ENCODE measurements at regions of chr6 and their contacts with region 1.

Region 1: GRCh38 chr6:43070028-43070632 is 6.0 kb upstream of the PTK7 start:
- DNase-seq: peak; percentile 83
- ATAC-seq: peak; percentile 93
- H3K4me3 ChIP-seq: no peak overlapping the region
- H3K27ac ChIP-seq: peak overlapping the region; percentile 7
- H3K4me1 ChIP-seq: peaks cover 12% of the 10 kb centered on the region
- H3K27me3 ChIP-seq: no peaks in the 10 kb centered on the region
- CTCF ChIP-seq: peak; percentile 72
- EP300 ChIP-seq: no peak
- POLR2A ChIP-seq: no peak
- RAD21 ChIP-seq: peak; percentile 83

Region 2: GRCh38 chr6:43045371-43045930 is 24.7 kb before region 1 on chr6:
- CTCF ChIA-PET with region 1: no interaction called
- POLR2A ChIA-PET with region 1: no interaction called
- in situ Hi-C with region 1: no loop called
- intact Hi-C with region 1: no loop called
- DNase-seq: no peak
- ATAC-seq: no peak; the same call in 2 of the 3 replicates
- H3K4me3 ChIP-seq: no peak overlapping the region
- H3K27ac ChIP-seq: no peak overlapping the region
- H3K4me1 ChIP-seq: peaks cover 2% of the 10 kb centered on the region
- H3K27me3 ChIP-seq: no peaks in the 10 kb centered on the region
- CTCF ChIP-seq: no peak
- EP300 ChIP-seq: no peak
- POLR2A ChIP-seq: no peak
- RAD21 ChIP-seq: no peak

Region 3: DNA sequence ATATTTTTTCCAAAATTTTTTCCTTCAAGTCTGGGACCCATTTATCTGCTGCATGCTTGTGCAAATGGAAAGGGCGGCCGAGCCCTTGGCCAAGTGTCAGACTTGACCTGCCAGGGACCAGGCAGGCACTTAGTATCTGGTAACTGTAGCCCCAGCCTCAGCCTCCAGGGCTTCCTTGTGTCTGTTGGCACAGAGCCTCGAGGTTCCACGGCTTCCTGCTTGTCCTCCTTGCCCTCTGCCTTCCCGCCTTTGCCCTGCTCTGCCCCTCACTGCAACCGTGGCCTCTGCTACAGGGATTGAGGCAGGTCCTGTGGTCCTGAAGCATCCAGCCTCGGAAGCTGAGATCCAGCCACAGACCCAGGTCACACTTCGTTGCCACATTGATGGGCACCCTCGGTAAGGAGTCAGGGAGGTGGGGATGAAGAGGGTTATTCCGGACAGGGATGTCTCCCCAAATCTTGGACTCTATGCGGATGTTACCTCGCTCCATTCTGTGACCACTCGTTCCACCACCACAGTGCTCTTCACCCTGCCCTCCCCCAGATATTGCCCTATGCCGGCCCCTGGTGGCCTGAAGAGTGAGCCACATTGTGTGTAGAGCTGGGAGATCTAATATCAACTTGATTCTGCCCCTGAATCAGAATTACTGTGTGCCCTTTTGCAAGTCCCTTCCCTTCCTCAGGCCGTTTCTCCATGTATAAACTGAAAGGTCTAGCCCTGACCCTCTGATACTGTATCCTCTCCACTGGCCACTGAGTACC is 59.5 kb after region 1 on chr6:
- CTCF ChIA-PET with region 1: interaction called, 14 read pairs
- POLR2A ChIA-PET with region 1: interaction called, 4 read pairs
- in situ Hi-C with region 1: loop called (anchors 10 kb)
- intact Hi-C with region 1: loop called (anchors 1 kb)
- DNase-seq: peak; percentile 52
- ATAC-seq: peak; percentile 79
- H3K4me3 ChIP-seq: no peak overlapping the region
- H3K27ac ChIP-seq: no peak overlapping the region
- H3K4me1 ChIP-seq: peaks cover 30% of the 10 kb centered on the region
- H3K27me3 ChIP-seq: no peaks in the 10 kb centered on the region
- CTCF ChIP-seq: peak; percentile 74
- EP300 ChIP-seq: no peak
- POLR2A ChIP-seq: no peak
- RAD21 ChIP-seq: peak; percentile 83

Region 4: DNA sequence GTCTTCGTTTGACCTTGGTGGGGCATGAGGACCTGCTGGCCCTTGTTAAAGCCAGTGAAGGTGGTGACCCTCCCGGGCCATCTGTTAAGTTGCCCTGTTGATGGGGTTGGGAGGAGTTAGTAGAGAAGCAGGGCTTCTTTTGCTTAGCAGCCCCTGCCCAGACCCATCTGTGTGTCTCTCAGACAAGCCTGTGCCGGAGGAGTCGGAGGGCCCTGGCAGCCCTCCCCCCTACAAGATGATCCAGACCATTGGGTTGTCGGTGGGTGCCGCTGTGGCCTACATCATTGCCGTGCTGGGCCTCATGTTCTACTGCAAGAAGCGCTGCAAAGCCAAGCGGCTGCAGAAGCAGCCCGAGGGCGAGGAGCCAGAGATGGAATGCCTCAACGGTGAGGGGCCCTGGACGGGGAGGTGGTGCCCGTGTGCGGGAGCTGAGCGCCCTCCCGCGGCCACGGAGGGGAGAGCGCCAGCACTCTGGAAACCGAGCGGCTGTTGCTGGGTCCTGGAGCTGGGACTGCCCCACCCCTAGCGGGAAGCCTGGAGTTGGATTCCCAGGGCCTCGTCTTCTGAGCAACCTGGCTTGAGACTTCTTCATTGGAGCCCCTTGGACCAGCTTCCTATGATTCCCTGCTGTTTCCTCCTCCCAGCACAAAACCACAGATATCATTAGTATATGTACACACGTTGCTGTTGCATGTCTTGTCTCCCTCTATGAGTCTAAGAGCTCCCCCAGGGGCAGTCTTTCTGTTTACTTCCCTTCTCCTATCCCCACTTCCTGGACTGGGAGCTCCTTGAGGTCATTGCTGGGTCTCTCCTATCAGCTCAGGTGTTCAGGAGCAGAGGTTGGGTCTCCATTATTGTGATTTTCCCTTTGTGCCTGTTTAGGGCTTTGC is 73.3 kb after region 1 on chr6:
- CTCF ChIA-PET with region 1: interaction called, 36 read pairs
- POLR2A ChIA-PET with region 1: no interaction called
- in situ Hi-C with region 1: loop called (anchors 5 kb)
- intact Hi-C with region 1: loop called (anchors 1 kb)
- DNase-seq: peak; percentile 76
- ATAC-seq: peak; percentile 95
- H3K4me3 ChIP-seq: no peak overlapping the region; a peak in 1 of 6 replicates
- H3K27ac ChIP-seq: no peak overlapping the region
- H3K4me1 ChIP-seq: peaks cover 21% of the 10 kb centered on the region
- H3K27me3 ChIP-seq: no peaks in the 10 kb centered on the region
- CTCF ChIP-seq: peak; percentile 100
- EP300 ChIP-seq: 0 out of 4 replicates have a peak, but pooled peaks of 1 of the 2 experiments have one; percentile 13
- POLR2A ChIP-seq: no peak
- RAD21 ChIP-seq: peak; percentile 100

Region 5: GRCh38 chr6:43170417-43171283 is 100.5 kb after region 1 on chr6 and contains the start of gene SRF:
- CTCF ChIA-PET with region 1: no interaction called
- POLR2A ChIA-PET with region 1: no interaction called
- in situ Hi-C with region 1: no loop called
- intact Hi-C with region 1: no loop called
- DNase-seq: peak; percentile 99
- ATAC-seq: peak; percentile 70
- H3K4me3 ChIP-seq: peak within 1 kb of the TSS; percentile 95 to 97 (median 95)
- H3K27ac ChIP-seq: peak within 1 kb of the TSS; percentile 82
- H3K4me1 ChIP-seq: peaks cover 37% of the 10 kb centered on the region
- H3K27me3 ChIP-seq: no peaks in the 10 kb centered on the region; a peak in 1 of 5 replicates
- CTCF ChIP-seq: 0 out of 2 replicates have a peak, but pooled peaks have one; percentile 4
- EP300 ChIP-seq: no peak; a peak in 1 of 4 replicates
- POLR2A ChIP-seq: peak in 1 of 2 experiments; percentile 74; a peak in 2 of 4 replicates
- RAD21 ChIP-seq: no peak
- total RNA-seq, gene SRF: 21.0 and 25.5 TPM in 2 replicates

Measured in HepG2 (cell line).